ENCODE measurements at regions of chr10 and their contacts with region 1.

Region 1: DNA sequence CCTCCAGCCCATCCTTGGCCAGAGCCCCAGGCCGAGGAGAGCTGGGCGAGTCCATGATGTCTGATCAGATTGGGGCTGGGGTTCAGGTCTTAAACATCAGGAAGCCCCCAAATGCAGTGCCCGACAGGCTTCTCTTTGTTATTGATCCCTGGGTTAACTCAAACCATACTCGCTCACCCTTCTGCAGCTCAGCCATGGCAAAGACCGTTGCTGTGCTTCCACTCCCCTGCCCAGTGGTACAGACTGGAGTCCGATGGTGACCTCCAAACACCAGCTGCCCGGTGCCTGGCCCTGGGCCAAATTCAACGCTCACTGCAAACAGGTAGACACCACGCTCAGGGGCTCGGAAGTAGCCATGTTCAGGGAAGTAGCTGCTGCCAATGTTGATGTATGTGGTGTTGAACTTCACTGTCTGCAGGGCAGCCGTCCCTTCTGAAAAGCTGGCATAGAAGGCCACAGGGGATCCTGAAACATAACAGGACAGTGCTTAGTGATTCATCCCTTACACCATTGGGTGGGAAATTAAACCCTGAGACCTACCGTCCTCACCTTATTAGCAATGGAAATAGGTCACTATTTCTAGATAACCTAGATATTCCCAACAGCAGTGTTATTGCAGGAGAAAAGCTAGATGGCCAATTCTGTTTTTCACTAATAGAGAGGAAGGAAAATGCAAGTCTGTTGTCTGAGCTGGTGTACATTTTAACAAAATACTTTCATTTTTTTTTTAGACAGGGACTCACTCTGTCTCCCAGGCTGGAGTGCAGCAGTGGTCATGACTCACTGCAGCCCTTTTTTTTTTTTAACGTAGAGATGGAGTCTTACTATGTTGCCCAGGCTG is 20.5 kb downstream of the MMRN2 start:
- DNase-seq: no peak
- ATAC-seq: no peak; the same call in 2 of the 3 replicates
- H3K4me3 ChIP-seq: no peak overlapping the region
- H3K27ac ChIP-seq: no peak overlapping the region
- H3K4me1 ChIP-seq: peaks cover 18% of the 10 kb centered on the region
- H3K27me3 ChIP-seq: no peaks in the 10 kb centered on the region
- CTCF ChIP-seq: no peak
- EP300 ChIP-seq: no peak
- POLR2A ChIP-seq: no peak
- RAD21 ChIP-seq: no peak

Region 2: DNA sequence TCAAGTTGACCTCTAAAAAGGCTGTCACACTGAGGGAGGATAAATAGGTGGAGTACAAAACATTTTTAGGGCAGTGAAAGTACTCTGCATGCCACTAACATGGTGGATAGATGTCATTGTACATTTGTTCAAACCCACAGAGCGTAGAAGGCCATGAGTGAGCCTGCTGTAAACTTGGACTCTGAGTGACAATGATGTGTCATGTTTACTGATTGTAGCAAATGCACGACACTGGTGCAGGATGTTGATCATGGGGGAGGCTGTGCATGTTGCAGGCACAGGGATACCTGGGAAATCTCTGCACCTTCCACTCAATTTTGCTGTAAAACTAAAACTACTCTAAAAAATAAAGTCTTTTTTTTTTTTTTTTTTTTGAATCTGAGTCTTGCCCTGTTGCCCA is 517.8 kb before region 1 on chr10:
- CTCF ChIA-PET with region 1: no interaction called
- POLR2A ChIA-PET with region 1: no interaction called
- in situ Hi-C with region 1: no loop called
- intact Hi-C with region 1: loop called (anchors 5 kb)
- DNase-seq: peak; percentile 67
- ATAC-seq: peak; percentile 95
- H3K4me3 ChIP-seq: no peak overlapping the region
- H3K27ac ChIP-seq: no peak overlapping the region
- H3K4me1 ChIP-seq: peaks cover 22% of the 10 kb centered on the region
- H3K27me3 ChIP-seq: no peaks in the 10 kb centered on the region
- CTCF ChIP-seq: no peak
- EP300 ChIP-seq: peak in 1 of 2 experiments; percentile 13; a peak in 1 of 4 replicates
- POLR2A ChIP-seq: no peak
- RAD21 ChIP-seq: no peak

Region 3: DNA sequence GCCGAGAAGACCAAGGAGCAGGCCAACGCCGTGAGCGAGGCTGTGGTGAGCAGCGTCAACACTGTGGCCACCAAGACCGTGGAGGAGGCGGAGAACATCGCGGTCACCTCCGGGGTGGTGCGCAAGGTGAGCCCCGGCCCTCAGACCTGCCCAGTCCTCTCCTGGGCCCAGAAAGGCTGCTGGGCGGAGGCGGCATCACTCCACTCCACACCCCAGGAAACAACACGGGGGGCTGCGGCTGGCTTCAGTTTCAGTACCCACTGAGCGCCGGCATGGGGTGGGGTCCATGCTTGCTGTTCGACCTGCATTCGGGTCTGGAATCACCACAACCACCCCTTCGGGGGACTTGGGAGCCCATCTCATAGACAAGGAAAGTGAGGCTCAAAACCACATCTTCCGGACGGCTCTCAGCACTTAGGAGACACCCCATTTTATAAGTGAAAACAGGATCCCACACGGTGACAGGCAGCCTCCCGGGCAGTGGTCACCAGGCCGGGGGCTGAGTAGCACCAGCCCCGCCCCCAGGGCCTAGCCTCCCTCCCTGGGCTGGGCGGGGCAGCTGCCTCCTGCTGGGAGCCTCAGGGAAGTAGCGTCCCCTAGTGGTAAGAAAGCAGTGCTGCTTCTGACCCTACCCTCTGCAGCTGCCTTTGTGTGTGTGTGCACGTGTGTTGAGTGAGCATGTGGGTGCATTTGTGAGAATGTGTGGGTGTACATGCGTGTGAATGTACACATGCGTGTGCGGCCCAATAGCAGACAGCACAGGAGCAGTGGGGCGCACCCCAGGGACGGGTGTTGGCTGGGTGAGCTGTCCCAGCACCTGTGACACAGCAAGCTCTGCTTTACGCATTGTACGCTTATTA is 23.4 kb after region 1 on chr10:
- CTCF ChIA-PET with region 1: interaction called, 20 read pairs
- POLR2A ChIA-PET with region 1: no interaction called
- in situ Hi-C with region 1: no loop called
- intact Hi-C with region 1: no loop called
- DNase-seq: peak; percentile 68
- ATAC-seq: peak; percentile 72
- H3K4me3 ChIP-seq: peak overlapping the region; percentile 12 to 66 (median 15); a peak in 5 of 6 replicates
- H3K27ac ChIP-seq: no peak overlapping the region
- H3K4me1 ChIP-seq: peaks cover 44% of the 10 kb centered on the region
- H3K27me3 ChIP-seq: peaks cover 11 to 75% of the 10 kb centered on the region in 2 experiments
- CTCF ChIP-seq: peak; percentile 97
- EP300 ChIP-seq: no peak
- POLR2A ChIP-seq: no peak
- RAD21 ChIP-seq: peak; percentile 80

Region 4: DNA sequence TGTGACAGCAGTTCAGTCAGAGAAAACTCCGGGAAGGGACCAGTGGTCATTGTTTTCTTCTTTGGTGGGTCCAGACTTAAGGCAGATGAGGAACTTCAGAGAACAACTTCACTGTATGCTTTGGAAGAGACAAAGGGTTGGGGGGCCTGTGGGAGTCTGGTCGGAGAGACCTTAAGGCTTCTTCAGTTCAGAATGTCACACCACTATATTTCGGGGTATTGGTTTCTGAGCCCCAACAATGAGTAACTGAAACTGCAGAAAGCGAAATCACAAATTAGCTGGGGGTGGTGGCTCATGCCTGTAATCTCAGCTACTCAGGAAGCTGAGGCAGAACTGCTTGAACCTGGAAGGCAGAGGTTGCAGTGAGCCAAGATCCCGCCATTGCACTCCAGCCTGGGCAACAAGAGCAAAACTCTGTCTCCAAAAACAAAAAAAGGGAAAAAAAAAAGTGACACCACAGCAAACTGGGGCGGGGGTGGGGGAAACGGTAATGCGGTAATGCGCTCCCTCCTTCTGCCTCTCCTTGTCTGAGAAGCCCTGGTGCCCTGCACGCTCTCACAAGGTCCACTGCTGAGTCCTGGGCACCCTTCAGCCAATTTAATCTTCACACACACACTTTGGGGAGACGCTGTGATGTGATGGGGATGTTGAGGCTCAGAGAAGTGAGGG is 29.2 kb after region 1 on chr10:
- CTCF ChIA-PET with region 1: interaction called, 26 read pairs
- POLR2A ChIA-PET with region 1: no interaction called
- in situ Hi-C with region 1: no loop called
- intact Hi-C with region 1: no loop called
- DNase-seq: no peak
- ATAC-seq: no peak
- H3K4me3 ChIP-seq: peak overlapping the region in 1 of 3 experiments; percentile 56; a peak in 2 of 6 replicates
- H3K27ac ChIP-seq: no peak overlapping the region
- H3K4me1 ChIP-seq: peaks cover 30% of the 10 kb centered on the region
- H3K27me3 ChIP-seq: peaks cover 7 to 62% of the 10 kb centered on the region in 2 experiments; a peak in 4 of 5 replicates
- CTCF ChIP-seq: no peak
- EP300 ChIP-seq: no peak
- POLR2A ChIP-seq: no peak
- RAD21 ChIP-seq: no peak